ENCODE measurements at regions of chr10 and their contacts with region 1.

Region 1: DNA sequence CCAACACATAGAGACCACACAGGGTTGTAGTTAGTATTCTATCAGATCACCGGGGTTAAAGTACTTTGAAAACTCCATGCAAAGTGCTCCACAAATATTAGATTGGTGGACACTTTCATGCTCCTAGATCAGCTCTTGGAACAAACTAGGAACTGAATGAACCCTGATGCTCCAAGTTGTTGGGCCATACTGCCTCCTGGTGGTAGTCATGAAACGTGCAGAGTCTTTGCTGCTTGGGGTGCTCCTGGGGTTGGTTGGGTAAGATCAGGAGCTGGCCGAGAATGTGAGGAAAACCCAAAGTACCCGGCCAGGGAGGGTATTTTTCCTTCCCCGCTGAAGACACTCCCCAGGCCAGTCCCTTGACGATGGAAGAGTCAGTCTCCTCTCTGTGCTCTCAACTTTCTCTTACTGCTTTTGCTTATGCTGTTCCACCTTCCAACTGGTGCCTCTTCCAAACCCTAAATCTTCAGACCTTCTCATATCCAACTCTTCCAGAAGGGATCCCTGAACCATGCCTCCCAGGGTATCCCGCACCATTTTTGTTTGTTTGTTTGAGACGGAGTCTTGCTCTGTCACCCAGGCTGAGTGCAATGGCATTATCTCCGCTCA is 920 bp upstream of the RPEL1 start:
- DNase-seq: peak in 3 of 4 donors; percentile 57 to 84 (median 70)
- ATAC-seq: peak; percentile 85
- H3K4me3 ChIP-seq: no peak overlapping the region
- H3K27ac ChIP-seq: no peak overlapping the region
- H3K4me1 ChIP-seq: peaks cover 12 to 33% of the 10 kb centered on the region in 2 donors
- H3K27me3 ChIP-seq: no peaks in the 10 kb centered on the region
- CTCF ChIP-seq: peak; percentile 81 to 93

Region 2: DNA sequence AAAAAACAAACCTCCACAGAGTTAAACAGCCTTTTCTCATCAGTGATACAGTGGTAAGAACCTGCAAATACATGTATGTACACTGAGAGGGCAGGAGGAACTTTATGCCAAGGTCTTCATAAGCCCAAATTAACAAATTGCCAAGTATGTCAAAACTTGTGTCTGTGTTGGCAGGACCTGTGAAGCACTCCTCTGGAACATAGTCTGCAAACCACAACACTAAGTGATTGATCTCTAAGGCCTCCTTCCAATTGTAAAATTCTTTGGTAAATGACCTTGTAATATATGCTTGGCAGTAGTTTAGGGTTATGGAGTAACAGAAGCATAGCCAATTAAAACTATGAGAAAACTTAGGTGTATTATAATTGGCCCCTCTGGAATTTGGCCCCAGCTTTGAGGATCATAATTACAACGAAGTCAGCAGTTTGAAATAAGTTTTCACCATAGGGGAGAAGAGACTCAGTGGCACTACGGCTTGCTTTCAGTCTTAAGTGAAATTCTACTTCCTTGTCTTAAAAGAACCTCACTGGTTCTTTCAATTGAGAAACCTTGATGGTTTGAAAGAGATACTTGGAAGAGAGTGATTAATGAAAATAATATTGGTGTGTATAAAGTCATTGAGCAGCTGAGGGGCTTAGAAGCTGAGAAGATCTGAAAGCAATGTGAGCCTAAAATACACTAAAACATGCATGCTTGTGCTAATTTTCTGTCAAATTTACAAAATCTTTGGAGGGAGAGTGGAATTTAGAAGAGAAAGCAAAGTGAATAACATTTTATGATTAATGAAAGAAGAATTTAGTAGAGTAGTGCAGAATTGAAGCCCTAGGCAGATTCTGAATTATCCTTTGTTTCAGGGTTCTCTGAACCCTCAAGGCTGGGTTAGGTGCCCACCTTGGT is 269.0 kb before region 1 on chr10:
- intact Hi-C with region 1: loop called in 1 of 2 experiments (anchors 5 kb)
- DNase-seq: no peak
- ATAC-seq: no peak
- H3K4me3 ChIP-seq: no peak overlapping the region
- H3K27ac ChIP-seq: no peak overlapping the region
- H3K4me1 ChIP-seq: no peaks in the 10 kb centered on the region
- H3K27me3 ChIP-seq: no peaks in the 10 kb centered on the region
- CTCF ChIP-seq: no peak

Region 3: DNA sequence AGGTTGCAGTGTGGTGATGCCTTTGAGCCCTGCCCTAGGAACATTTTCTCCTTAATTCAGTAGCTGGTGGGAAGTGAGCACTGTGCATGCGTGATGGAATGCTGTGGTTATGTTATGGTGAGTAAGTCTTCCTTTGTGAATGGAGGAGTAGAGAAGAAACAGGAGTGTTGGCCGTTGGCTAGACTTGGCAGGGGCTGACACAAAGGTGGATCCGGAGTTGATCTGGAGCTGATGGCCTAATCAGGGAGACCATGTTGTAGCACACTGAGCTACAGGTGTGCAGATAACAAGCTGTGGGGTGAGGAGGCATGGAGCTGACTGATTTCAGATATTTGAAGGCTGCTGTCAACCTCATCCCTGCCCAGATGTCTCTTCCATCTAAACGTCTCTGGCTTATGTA is 204.3 kb before region 1 on chr10:
- intact Hi-C with region 1: no loop called
- DNase-seq: no peak
- ATAC-seq: no peak
- H3K4me3 ChIP-seq: no peak overlapping the region
- H3K27ac ChIP-seq: no peak overlapping the region
- H3K4me1 ChIP-seq: no peaks in the 10 kb centered on the region
- H3K27me3 ChIP-seq: no peaks in the 10 kb centered on the region
- CTCF ChIP-seq: no peak

Region 4: GRCh38 chr10:103080891-103081581 is 163.7 kb before region 1 on chr10:
- intact Hi-C with region 1: no loop called
- DNase-seq: no peak
- ATAC-seq: no peak
- H3K4me3 ChIP-seq: no peak overlapping the region
- H3K27ac ChIP-seq: no peak overlapping the region
- H3K4me1 ChIP-seq: no peaks in the 10 kb centered on the region
- H3K27me3 ChIP-seq: no peaks in the 10 kb centered on the region
- CTCF ChIP-seq: no peak

Region 5: DNA sequence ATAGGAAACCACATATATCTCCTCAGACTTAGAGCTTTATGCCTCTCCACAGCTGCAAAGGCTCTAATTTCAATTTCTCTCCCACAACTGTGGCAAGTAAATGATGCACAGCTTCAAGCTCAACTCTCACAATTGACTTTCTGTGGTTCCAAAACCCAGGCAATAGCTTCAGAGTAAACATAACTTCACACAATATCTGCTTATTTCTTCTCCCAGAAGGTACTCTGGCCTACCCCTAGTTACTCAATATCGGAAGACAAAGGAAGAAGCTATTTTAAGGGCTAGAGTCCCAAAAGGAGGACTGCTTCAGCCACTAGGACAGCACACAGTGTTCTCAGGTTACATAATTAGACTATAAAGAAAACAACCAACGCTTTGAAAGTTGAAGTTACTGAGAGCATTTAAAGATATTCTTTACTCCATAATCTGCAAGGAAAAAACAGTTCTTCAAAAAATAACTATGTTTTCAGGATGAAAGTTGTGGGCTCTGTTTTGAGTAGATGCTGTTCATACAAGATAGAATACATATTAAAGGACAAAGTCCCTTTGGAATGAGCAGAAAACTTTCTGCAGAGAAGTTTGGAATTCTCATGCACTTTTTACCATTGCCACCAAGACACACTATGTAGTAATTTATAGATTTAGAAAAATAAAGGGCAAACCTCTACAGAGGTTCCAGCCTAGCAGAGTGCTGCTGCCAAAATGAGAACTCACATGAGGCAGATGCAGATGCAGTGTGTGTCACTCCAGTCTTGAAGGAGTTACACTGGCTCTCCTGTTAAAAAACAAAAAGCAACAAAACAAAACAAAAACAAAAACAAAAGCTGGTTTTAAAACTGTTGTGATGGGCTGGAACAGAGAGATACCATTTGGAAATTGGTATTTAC is 133.5 kb before region 1 on chr10:
- intact Hi-C with region 1: loop called in 1 of 2 experiments (anchors 10 kb)
- DNase-seq: no peak
- ATAC-seq: peak; percentile 66
- H3K4me3 ChIP-seq: no peak overlapping the region
- H3K27ac ChIP-seq: peak overlapping the region; percentile 2 to 8
- H3K4me1 ChIP-seq: peaks cover 17 to 31% of the 10 kb centered on the region in 2 donors
- H3K27me3 ChIP-seq: no peaks in the 10 kb centered on the region
- CTCF ChIP-seq: no peak

Measured in left lung (tissue), 14 donors.